Activated B cell treated with CpG ODN at 0.5 μM for 24 hours (primary cell): ENCODE measurements at regions of chr2 and their contacts with region 1.

Region 1: DNA sequence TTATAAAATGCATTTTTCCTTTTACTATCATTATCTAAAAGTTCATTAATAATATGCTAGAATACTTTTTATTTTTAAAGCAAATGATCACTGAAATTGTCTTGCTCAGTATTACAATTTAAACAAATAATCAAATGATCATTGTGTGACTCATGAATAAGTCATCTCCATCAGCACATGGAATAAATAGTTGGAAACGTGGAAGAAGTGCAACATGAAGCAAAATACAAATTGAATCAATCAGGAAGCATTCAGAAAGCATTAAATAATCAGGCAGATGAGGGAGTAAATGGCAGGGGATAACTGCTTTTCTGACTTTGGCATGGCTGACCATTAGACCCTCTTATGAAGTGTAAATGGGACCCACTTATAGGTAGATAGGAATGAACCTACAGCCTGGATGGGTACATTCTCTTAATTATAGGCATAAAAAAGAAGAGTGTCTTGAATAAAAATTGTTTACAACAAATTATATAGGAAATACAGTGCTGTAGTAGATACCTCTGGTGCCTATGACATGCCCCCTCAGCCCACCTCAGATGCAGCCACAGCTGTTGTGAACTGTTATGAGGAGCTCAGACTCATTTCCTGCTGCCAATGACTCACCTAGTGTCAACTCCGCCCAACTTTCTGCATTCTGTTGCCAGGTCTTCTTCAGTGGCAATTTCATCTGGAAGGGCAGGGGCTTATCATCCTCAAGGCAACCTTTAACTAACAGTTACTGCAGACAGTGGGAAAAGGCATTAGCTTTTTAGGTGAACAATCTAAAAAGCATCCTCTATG is 936.0 kb downstream of the TRIB2 start:
- DNase-seq: no peak
- ATAC-seq: no peak
- H3K4me3 Mint-ChIP-seq: no peak overlapping the region
- H3K27ac Mint-ChIP-seq: no peak overlapping the region
- H3K4me1 Mint-ChIP-seq: no peaks in the 10 kb centered on the region
- H3K27me3 Mint-ChIP-seq: no peaks in the 10 kb centered on the region
- CTCF ChIP-seq: no peak

Region 2: DNA sequence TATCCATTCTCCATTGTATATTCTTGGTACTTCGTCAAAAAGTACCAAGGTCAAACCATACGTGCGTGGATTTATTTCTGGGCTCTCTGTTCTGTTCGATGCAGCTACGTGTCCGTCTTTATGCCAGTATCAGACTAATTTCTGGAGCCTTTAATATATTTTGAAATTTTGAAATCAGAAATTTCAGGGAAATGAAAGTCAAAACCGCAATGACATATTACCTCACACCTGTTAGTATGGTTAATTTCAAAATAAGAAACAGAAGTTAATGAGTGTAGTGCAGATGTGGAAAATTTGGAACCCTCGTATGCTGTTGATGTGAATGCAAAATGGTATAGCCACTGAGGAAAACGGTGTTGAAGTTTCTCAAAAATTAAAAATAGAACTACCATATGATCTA is 1092.1 kb before region 1 on chr2:
- CTCF ChIA-PET with region 1: no interaction called
- POLR2A ChIA-PET with region 1: no interaction called
- intact Hi-C with region 1: no loop called
- DNase-seq: no peak
- ATAC-seq: peak; percentile 62
- H3K4me3 Mint-ChIP-seq: peak overlapping the region; percentile 19
- H3K27ac Mint-ChIP-seq: peak overlapping the region; percentile 25
- H3K4me1 Mint-ChIP-seq: peaks cover 27% of the 10 kb centered on the region
- H3K27me3 Mint-ChIP-seq: peaks cover 3% of the 10 kb centered on the region
- CTCF ChIP-seq: no peak

Region 3: DNA sequence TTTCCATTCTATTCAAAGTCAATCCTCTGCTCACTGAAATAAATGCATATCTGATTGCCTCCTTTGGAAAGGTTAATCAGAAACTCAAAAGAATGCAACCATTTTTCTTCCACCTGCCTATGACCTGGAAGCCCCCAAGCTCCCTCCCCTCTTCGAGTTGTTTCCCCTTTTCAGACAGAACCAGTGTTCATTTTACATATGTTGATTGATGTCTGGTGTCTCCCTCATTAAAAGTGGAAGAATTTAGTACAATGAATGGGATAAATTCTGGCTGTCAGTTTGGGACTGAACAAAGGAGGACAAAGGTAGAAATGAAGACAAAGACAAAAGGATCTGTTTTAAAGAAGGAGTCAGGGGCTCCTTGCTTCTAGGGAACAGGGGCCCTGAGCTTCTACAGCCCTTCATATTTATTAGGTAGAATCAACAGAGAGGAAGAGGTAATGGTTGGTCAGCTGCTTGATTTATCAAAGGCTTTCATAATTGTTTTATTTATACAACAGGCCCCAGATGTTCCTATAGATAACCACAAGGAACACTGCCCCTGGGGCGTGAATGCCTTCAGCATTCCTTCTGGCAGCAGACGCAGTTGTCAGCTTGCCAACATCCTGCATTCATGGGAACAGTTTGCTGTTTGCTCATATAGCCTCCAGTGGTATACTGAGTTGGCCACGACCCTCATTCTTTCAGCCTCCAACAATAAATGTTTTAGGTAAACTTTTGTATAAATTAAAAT is 30.0 kb after region 1 on chr2:
- CTCF ChIA-PET with region 1: no interaction called
- POLR2A ChIA-PET with region 1: no interaction called
- intact Hi-C with region 1: loop called (anchors 1 kb)
- DNase-seq: no peak
- ATAC-seq: no peak
- H3K4me3 Mint-ChIP-seq: no peak overlapping the region
- H3K27ac Mint-ChIP-seq: no peak overlapping the region
- H3K4me1 Mint-ChIP-seq: no peaks in the 10 kb centered on the region
- H3K27me3 Mint-ChIP-seq: no peaks in the 10 kb centered on the region
- CTCF ChIP-seq: no peak

Region 4: GRCh38 chr2:13725945-13726344 is 73.2 kb after region 1 on chr2:
- CTCF ChIA-PET with region 1: no interaction called
- POLR2A ChIA-PET with region 1: no interaction called
- intact Hi-C with region 1: no loop called
- DNase-seq: no peak
- ATAC-seq: no peak
- H3K4me3 Mint-ChIP-seq: no peak overlapping the region
- H3K27ac Mint-ChIP-seq: no peak overlapping the region
- H3K4me1 Mint-ChIP-seq: no peaks in the 10 kb centered on the region
- H3K27me3 Mint-ChIP-seq: no peaks in the 10 kb centered on the region
- CTCF ChIP-seq: no peak

Region 5: GRCh38 chr2:13858626-13859025 is 205.9 kb after region 1 on chr2:
- CTCF ChIA-PET with region 1: no interaction called
- POLR2A ChIA-PET with region 1: no interaction called
- intact Hi-C with region 1: no loop called
- DNase-seq: no peak
- ATAC-seq: no peak
- H3K4me3 Mint-ChIP-seq: no peak overlapping the region
- H3K27ac Mint-ChIP-seq: no peak overlapping the region
- H3K4me1 Mint-ChIP-seq: no peaks in the 10 kb centered on the region
- H3K27me3 Mint-ChIP-seq: no peaks in the 10 kb centered on the region
- CTCF ChIP-seq: no peak